H1 (cell line): ENCODE measurements at regions of chr11 and their contacts with region 1.

Region 1: DNA sequence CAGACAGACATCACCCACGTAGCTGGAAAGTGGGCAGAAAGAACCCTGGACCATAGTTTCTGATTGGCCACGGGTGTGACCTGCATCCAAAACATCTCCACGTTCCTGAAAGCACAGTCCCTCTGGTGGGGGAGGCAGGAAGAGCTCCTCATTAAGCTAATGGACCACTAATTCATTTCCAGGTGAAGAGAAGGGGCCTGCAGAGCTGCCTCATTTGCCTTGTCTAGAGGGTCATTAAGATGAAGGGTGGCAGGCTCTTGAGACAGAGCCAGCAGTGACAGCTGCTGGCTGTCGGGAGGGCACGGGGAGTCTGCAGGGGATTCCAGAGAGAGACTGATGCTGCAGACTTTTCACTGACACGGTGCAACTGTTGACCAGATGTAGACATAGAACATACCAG is 149.6 kb upstream of the OPCML start:
- DNase-seq: peak in 1 of 2 experiments; percentile 54
- H3K4me3 ChIP-seq: no peak overlapping the region
- H3K27ac ChIP-seq: no peak overlapping the region
- H3K4me1 ChIP-seq: peaks cover 0 to 3% (median under 1%) of the 10 kb centered on the region in 4 experiments; a peak in 1 of 7 replicates
- H3K27me3 ChIP-seq: no peaks in the 10 kb centered on the region
- CTCF ChIP-seq: peak; percentile 44 to 58 (median 50); a peak in 3 of 4 replicates
- EP300 ChIP-seq: no peak
- POLR2A ChIP-seq: no peak
- RAD21 ChIP-seq: peak; percentile 48 to 69

Region 2: DNA sequence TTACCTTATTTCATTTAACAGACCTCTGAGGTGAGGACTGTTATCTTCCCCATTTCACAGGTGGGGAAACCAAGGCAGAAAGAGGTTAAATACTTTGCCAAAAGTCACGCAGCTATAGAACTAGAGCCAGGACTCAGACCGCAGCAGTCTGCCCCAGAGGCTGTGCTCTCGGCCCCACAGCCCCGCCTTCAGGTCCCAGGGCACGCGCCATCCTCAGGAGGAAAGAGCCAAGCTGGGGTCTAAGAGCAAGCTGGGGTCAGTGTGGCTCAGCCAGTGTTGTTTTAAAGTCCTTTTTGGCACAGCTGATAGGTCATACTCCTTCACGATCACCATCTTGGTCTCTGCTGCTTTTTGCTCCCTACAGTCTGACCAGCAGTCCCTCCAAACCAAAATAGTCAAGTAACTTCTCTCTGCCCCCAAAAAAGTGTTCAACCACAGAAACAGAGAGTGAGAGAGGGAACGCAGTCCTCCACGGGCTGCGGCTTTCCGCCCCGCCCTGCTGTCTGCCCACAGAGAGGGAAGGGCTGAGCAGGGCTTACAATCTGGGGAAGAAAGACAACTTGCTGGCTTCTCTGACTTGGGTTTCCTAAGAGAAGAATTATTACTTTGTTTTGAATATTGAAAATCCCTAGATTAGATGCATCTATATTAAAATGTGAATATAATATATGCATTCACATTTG is 12.4 kb before region 1 on chr11:
- CTCF ChIA-PET with region 1: interaction called, 15 read pairs
- POLR2A ChIA-PET with region 1: no interaction called
- DNase-seq: no peak
- H3K4me3 ChIP-seq: no peak overlapping the region
- H3K27ac ChIP-seq: no peak overlapping the region
- H3K4me1 ChIP-seq: peaks cover 0 to 16% (median 0%) of the 10 kb centered on the region in 4 experiments; a peak in 2 of 7 replicates
- H3K27me3 ChIP-seq: no peaks in the 10 kb centered on the region
- CTCF ChIP-seq: peak in 1 of 3 experiments; percentile 16; a peak in 1 of 4 replicates
- EP300 ChIP-seq: no peak
- POLR2A ChIP-seq: no peak
- RAD21 ChIP-seq: peak; percentile 22 to 37; a peak in 3 of 4 replicates

Region 3: GRCh38 chr11:133712051-133712560 is 30.2 kb after region 1 on chr11:
- CTCF ChIA-PET with region 1: interaction called, 14 read pairs
- POLR2A ChIA-PET with region 1: no interaction called
- DNase-seq: peak in 1 of 2 experiments; percentile 39
- H3K4me3 ChIP-seq: peak overlapping the region in 1 of 4 experiments; percentile 34; a peak in 2 of 8 replicates
- H3K27ac ChIP-seq: no peak overlapping the region
- H3K4me1 ChIP-seq: peaks cover 0 to 38% (median 10%) of the 10 kb centered on the region in 4 experiments; a peak in 6 of 7 replicates
- H3K27me3 ChIP-seq: peaks cover 0 to 12% (median 2%) of the 10 kb centered on the region in 4 experiments; a peak in 4 of 7 replicates
- CTCF ChIP-seq: no peak
- EP300 ChIP-seq: no peak
- POLR2A ChIP-seq: no peak
- RAD21 ChIP-seq: no peak